Thyroid gland (tissue), 4 donors: ENCODE measurements at regions of chr6 and their contacts with region 1.

Region 1: GRCh38 chr6:169984181-169985120 is 233.0 kb downstream of the ERMARD start:
- DNase-seq: peak; percentile 83 to 92
- H3K4me3 ChIP-seq: no peak overlapping the region
- H3K27ac ChIP-seq: peak overlapping the region in 1 of 3 donors; percentile 41
- H3K4me1 ChIP-seq: peaks cover 11 to 21% of the 10 kb centered on the region in 2 donors
- H3K27me3 ChIP-seq: no peaks in the 10 kb centered on the region
- CTCF ChIP-seq: no peak
- POLR2A ChIP-seq: no peak

Region 2: GRCh38 chr6:170037541-170038250 is 53.2 kb after region 1 on chr6:
- intact Hi-C with region 1: no loop called
- DNase-seq: no peak
- H3K4me3 ChIP-seq: no peak overlapping the region
- H3K27ac ChIP-seq: no peak overlapping the region
- H3K4me1 ChIP-seq: no peaks in the 10 kb centered on the region
- H3K27me3 ChIP-seq: no peaks in the 10 kb centered on the region
- CTCF ChIP-seq: no peak
- POLR2A ChIP-seq: no peak

Region 3: GRCh38 chr6:170114956-170115855 is 130.8 kb after region 1 on chr6:
- intact Hi-C with region 1: no loop called
- DNase-seq: no peak
- H3K4me3 ChIP-seq: no peak overlapping the region
- H3K27ac ChIP-seq: no peak overlapping the region
- H3K4me1 ChIP-seq: no peaks in the 10 kb centered on the region
- H3K27me3 ChIP-seq: no peaks in the 10 kb centered on the region
- CTCF ChIP-seq: no peak
- POLR2A ChIP-seq: no peak

Region 4: DNA sequence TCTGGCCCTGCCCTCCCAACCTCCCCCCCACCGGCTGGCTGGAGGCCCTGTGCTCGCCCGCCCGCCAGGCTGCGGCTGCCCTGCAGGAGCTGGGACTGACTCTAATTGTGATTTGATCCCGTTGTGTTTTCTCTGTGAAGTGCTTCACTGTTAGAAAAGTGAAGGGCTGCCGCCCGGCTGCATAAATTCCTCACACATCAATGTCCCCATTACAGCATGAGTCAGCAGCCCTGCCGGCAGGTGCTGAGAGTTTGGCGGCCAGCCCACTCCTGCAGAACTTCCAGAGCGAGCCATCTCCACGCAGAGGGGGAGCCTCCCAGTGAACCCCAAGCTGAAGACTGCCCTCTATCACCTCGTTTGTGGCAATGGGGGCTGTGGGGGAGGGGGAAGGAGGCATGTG is 168.5 kb after region 1 on chr6:
- intact Hi-C with region 1: loop called (anchors 10 kb)
- DNase-seq: peak; percentile 93 to 94
- H3K4me3 ChIP-seq: no peak overlapping the region
- H3K27ac ChIP-seq: peak overlapping the region; percentile 44 to 83 (median 60)
- H3K4me1 ChIP-seq: peaks cover 16 to 20% of the 10 kb centered on the region in 2 donors
- H3K27me3 ChIP-seq: no peaks in the 10 kb centered on the region
- CTCF ChIP-seq: no peak
- POLR2A ChIP-seq: no peak

Region 5: DNA sequence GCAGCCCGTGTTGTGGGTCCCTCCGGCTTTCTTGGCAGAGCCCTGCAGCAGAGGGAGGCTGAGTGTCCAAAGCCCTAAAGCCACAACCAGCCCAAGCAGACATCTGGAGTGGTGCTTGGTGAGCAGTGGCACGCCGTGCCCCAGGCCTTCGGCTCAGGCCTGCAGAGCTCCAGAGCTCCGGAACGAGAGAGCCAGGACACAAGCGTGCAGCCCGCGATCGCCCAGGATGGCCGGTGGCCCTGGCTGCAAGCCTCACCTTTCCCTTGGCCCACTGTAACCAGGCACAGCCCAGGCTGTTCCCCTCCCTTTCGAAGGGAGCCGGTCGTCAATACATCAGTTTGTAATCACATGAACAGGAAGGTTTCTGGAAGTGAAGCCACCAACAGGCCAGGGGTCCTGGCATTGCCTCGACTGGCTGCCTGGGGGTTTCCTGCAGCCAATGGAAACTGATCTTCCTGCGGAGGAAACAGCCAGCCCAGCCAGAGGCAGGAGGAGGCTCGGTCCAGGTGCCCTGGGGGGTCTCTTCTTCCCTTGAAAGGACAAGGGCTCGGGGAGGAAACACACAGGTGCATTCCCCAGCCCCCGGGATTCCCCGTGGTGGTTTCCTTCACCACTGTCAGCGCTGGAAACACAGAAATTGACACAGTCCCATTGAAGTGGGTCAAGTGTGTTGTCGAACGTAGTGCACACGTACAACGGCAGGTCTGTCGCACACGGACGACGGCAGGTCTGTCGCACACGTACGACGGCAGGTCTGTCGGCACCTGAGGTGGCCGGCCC is 225.3 kb after region 1 on chr6:
- intact Hi-C with region 1: no loop called
- DNase-seq: no peak
- H3K4me3 ChIP-seq: no peak overlapping the region
- H3K27ac ChIP-seq: no peak overlapping the region
- H3K4me1 ChIP-seq: no peaks in the 10 kb centered on the region
- H3K27me3 ChIP-seq: no peaks in the 10 kb centered on the region
- CTCF ChIP-seq: no peak
- POLR2A ChIP-seq: no peak